Sigmoid colon (tissue), 7 donors: ENCODE measurements at regions of chr6 and their contacts with region 1.

Region 1: GRCh38 chr6:83067448-83068413 is at the start of gene DOP1A:
- DNase-seq: peak; percentile 97
- H3K4me3 ChIP-seq: peak within 1 kb of the TSS; percentile 88 to 92 (median 92)
- H3K27ac ChIP-seq: peak within 1 kb of the TSS; percentile 90 to 97 (median 92)
- H3K4me1 ChIP-seq: peaks cover 0 to 24% (median 12%) of the 10 kb centered on the region in 4 donors
- H3K27me3 ChIP-seq: no peaks in the 10 kb centered on the region
- CTCF ChIP-seq: peak; percentile 84 to 95 (median 90)
- EP300 ChIP-seq: no peak
- POLR2A ChIP-seq: peak in 1 of 2 donors; percentile 27
- total RNA-seq, gene DOP1A: 26.1 to 33.9 (median 28.4) TPM

Region 2: DNA sequence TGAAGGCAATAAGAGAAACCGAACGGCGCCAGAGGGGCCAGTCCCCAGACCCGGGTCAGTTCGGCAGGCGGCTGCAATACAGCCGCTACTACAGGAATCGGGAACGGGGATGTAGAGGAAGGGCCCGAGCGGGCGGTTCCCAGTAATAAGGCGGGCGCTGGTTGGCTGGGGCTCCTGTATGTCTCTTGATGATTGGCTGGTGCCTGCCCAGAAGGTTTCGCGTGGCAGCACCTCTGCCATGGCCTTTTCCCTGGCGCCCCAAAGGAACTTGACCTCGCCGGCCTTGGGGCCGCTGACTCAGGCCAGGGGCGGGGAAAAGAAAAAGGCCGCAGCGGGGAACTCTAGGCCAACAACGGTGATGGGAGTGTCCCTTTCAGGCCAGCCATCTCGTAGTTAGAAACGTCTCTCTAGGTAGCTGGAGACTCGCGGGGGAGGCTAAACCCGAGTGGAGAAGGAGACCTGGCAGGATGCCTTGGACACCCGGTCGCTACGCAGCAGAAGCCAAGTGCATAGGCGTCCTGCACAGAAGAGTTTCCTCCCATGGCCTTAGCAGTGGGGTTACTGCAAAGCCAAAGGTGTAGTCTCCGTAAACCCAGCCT is 820.0 kb before region 1 on chr6 and contains the start of gene IBTK:
- intact Hi-C with region 1: loop called (anchors 5 kb)
- DNase-seq: peak; percentile 97
- H3K4me3 ChIP-seq: peak within 1 kb of the TSS; percentile 70 to 94 (median 82)
- H3K27ac ChIP-seq: peak within 1 kb of the TSS; percentile 89 to 97 (median 92)
- H3K4me1 ChIP-seq: peaks cover 0 to 41% (median 25%) of the 10 kb centered on the region in 4 donors
- H3K27me3 ChIP-seq: no peaks in the 10 kb centered on the region
- CTCF ChIP-seq: no peak
- EP300 ChIP-seq: no peak
- POLR2A ChIP-seq: peak; percentile 52 to 83
- total RNA-seq, gene IBTK: 19.9 to 26.2 (median 25.4) TPM

Region 3: GRCh38 chr6:83114164-83114563 is 46.4 kb after region 1 on chr6:
- intact Hi-C with region 1: loop called (anchors 5 kb)
- DNase-seq: no peak
- H3K4me3 ChIP-seq: no peak overlapping the region
- H3K27ac ChIP-seq: no peak overlapping the region
- H3K4me1 ChIP-seq: no peaks in the 10 kb centered on the region
- H3K27me3 ChIP-seq: no peaks in the 10 kb centered on the region
- CTCF ChIP-seq: no peak
- EP300 ChIP-seq: no peak
- POLR2A ChIP-seq: no peak

Region 4: GRCh38 chr6:83192871-83193746 is 125.4 kb after region 1 on chr6 and contains the starts of genes PGM3 and RWDD2A:
- intact Hi-C with region 1: loop called (anchors 5 kb)
- DNase-seq: peak; percentile 94
- H3K4me3 ChIP-seq: peak within 1 kb of the TSS; percentile 68 to 94 (median 89)
- H3K27ac ChIP-seq: peak within 1 kb of the TSS; percentile 77 to 88 (median 86)
- H3K4me1 ChIP-seq: peaks cover 0 to 23% (median 16%) of the 10 kb centered on the region in 4 donors
- H3K27me3 ChIP-seq: no peaks in the 10 kb centered on the region
- CTCF ChIP-seq: no peak
- EP300 ChIP-seq: no peak
- POLR2A ChIP-seq: peak; percentile 73 to 75
- total RNA-seq, gene PGM3: 7.2 to 10.4 (median 8.0) TPM
- total RNA-seq, gene RWDD2A: 2.5 to 4.1 (median 3.7) TPM

Region 5: GRCh38 chr6:83215131-83216047 is 147.7 kb after region 1 on chr6:
- intact Hi-C with region 1: loop called (anchors 2 kb)
- DNase-seq: peak; percentile 71
- H3K4me3 ChIP-seq: no peak overlapping the region
- H3K27ac ChIP-seq: no peak overlapping the region
- H3K4me1 ChIP-seq: no peaks in the 10 kb centered on the region
- H3K27me3 ChIP-seq: no peaks in the 10 kb centered on the region
- CTCF ChIP-seq: peak; percentile 25 to 62 (median 50)
- EP300 ChIP-seq: no peak
- POLR2A ChIP-seq: no peak

Region 6: GRCh38 chr6:83430611-83431563 is 363.2 kb after region 1 on chr6 and contains the start of gene ME1:
- intact Hi-C with region 1: loop called (anchors 5 kb)
- DNase-seq: peak; percentile 90
- H3K4me3 ChIP-seq: peak within 1 kb of the TSS; percentile 52 to 84 (median 74)
- H3K27ac ChIP-seq: peak within 1 kb of the TSS; percentile 78 to 82 (median 80)
- H3K4me1 ChIP-seq: peaks cover 0 to 19% (median 14%) of the 10 kb centered on the region in 4 donors
- H3K27me3 ChIP-seq: no peaks in the 10 kb centered on the region
- CTCF ChIP-seq: no peak
- EP300 ChIP-seq: no peak
- POLR2A ChIP-seq: no peak
- total RNA-seq, gene ME1: 11.3 to 18.5 (median 16.3) TPM

Region 7: DNA sequence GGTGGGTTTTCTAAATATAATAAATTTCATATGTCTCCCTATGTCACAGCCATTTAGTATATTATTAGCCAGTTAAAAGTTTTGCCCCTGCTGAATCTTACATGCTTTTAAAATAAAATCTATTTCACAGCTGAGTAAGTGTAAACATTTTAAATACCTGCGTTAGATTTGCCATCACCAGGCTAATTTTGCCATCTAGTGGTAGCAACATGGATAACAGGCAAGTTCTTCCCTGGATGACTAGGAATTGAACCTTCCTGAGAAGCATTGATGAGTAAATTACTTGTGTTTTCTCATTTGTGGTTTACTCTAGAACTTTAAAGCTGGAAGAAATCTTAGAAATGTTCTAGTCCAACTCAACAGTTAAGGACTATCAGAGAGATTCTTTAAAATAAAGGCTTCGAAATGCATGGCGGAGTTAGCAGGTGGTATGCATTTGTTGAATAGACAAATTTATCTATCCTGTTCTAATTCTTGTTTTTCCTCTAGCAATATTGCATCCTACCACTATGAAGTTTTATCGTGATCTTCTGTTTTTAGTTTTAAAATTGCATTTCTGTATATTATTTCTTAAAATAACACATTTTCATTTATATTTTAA is 447.2 kb after region 1 on chr6:
- intact Hi-C with region 1: loop called (anchors 10 kb)
- DNase-seq: no peak
- H3K4me3 ChIP-seq: no peak overlapping the region
- H3K27ac ChIP-seq: no peak overlapping the region
- H3K4me1 ChIP-seq: peaks cover 0 to 14% (median 10%) of the 10 kb centered on the region in 4 donors
- H3K27me3 ChIP-seq: no peaks in the 10 kb centered on the region
- CTCF ChIP-seq: peak; percentile 36 to 73 (median 70)
- EP300 ChIP-seq: no peak
- POLR2A ChIP-seq: no peak